Natural killer cell (primary cell): ENCODE measurements at regions of chr11 and their contacts with region 1.

Region 1: GRCh38 chr11:6603287-6604080 is at the starts of genes ILK and RRP8:
- DNase-seq: peak; percentile 84 to 90
- ATAC-seq: peak; percentile 76 to 91 (median 85)
- H3K4me3 ChIP-seq: peak within 1 kb of the TSS; percentile 85
- H3K4me3 Mint-ChIP-seq: no peak within 1 kb of the TSS
- H3K27ac ChIP-seq: peak within 1 kb of the TSS; percentile 93
- H3K27ac Mint-ChIP-seq: no peak within 1 kb of the TSS
- H3K4me1 ChIP-seq: peaks cover 55% of the 10 kb centered on the region
- H3K4me1 Mint-ChIP-seq: peaks cover 29 to 32% of the 10 kb centered on the region in 2 donors
- H3K27me3 ChIP-seq: no peaks in the 10 kb centered on the region
- H3K27me3 Mint-ChIP-seq: no peaks in the 10 kb centered on the region
- CTCF ChIP-seq: no peak
- total RNA-seq, gene ILK: 109 to 145 (median 142) TPM
- total RNA-seq, gene RRP8: 31.3 to 35.9 (median 31.9) TPM

Region 2: DNA sequence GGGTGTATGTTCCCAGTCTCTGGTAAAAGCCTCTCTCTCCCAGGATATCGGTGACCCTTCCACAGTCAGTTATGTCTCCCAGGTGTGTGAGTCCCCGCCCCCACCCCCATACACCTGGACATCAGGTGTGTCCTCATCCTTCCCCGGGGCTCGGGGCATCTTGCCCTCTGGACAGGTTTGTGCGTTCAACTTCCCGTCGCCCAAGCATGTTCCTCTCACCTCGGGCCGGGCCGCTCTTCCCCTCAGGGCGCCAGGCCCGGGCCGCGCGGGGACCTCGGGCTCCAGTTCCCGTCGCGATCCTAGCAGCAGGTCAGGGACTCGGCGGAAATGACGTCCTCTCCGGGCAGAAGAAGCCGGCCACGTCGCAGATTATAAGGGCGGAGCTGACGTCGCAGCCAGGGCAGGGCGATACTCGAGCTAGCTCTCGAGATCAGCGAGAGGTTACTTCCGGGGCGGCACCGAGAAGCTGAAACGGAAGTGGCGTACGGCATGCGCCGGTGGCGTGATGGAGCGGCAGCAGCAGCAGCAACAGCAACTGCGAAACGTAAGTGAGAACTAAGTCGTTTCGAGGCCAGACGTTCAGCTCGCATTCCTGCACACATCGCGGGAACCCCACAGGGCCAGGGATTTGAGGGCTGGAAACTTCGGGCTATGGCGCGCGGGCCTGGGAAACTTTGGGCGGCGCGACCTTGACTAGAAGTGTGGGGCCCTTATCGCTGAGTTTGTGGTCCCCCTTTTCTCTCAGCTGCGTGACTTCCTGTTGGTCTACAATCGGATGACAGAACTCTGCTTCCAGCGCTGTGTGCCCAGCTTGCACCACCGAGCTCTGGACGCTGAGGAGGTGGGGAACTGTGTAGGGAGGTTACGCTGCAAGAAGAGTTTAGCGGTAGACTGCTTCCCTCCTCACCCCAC is 122.2 kb before region 1 on chr11 and contains the starts of genes ARFIP2 and TIMM10B:
- intact Hi-C with region 1: loop called (anchors 2 kb)
- DNase-seq: peak; percentile 95 to 99
- ATAC-seq: peak; percentile 92 to 98 (median 96)
- H3K4me3 ChIP-seq: peak within 1 kb of the TSS; percentile 74
- H3K4me3 Mint-ChIP-seq: peak within 1 kb of the TSS; percentile 91
- H3K27ac ChIP-seq: peak within 1 kb of the TSS; percentile 95
- H3K27ac Mint-ChIP-seq: peak within 1 kb of the TSS; percentile 95 to 99
- H3K4me1 ChIP-seq: peaks cover 22% of the 10 kb centered on the region
- H3K4me1 Mint-ChIP-seq: peaks cover 32 to 37% of the 10 kb centered on the region in 2 donors
- H3K27me3 ChIP-seq: no peaks in the 10 kb centered on the region
- H3K27me3 Mint-ChIP-seq: no peaks in the 10 kb centered on the region
- CTCF ChIP-seq: no peak
- total RNA-seq, gene ARFIP2: 44.7 to 62.3 (median 51.4) TPM
- total RNA-seq, gene TIMM10B: 69.6 to 92.8 (median 71.4) TPM

Region 3: GRCh38 chr11:6619004-6619745 is 15.7 kb after region 1 on chr11 and contains the start of gene TPP1:
- intact Hi-C with region 1: loop called (anchors 1 kb)
- DNase-seq: peak; percentile 89 to 95
- ATAC-seq: peak; percentile 89 to 97 (median 96)
- H3K4me3 ChIP-seq: peak within 1 kb of the TSS; percentile 72
- H3K4me3 Mint-ChIP-seq: no peak within 1 kb of the TSS
- H3K27ac ChIP-seq: peak within 1 kb of the TSS; percentile 89
- H3K27ac Mint-ChIP-seq: no peak within 1 kb of the TSS
- H3K4me1 ChIP-seq: peaks cover 26% of the 10 kb centered on the region
- H3K4me1 Mint-ChIP-seq: peaks cover 0 to 8% of the 10 kb centered on the region in 2 donors
- H3K27me3 ChIP-seq: no peaks in the 10 kb centered on the region
- H3K27me3 Mint-ChIP-seq: no peaks in the 10 kb centered on the region
- CTCF ChIP-seq: no peak
- total RNA-seq, gene TPP1: 123 to 135 (median 131) TPM

Region 4: DNA sequence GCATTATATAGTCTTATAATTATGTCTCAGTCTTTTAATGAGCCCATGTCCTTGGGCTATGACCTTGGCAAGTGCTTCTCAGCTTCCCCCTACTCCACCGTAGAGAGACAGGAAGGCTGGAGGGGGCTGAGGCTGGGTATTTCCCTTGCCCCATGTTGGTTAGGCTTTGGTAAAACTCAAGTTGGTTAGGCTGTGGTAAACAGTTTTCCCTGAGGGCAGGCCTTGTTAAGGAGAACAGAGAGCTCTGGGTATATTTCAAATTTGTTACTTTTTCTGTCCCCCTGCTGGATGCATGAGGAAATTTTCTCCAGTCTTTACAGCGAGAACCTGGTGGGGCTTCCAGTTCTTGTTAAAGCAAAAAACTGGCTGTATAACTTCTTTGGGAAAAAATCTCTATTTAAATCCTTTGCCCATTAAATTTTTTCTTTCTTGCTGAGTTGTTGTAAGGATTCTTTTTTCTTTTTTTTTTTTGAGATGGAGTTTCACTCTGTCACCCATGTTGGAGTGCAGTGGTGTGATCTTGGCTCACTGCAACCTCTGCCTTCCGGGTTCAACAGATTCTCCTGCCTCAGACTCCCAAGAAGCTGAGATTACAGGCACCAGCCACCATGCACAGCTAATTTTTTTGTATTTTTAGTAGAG is 64.4 kb after region 1 on chr11:
- intact Hi-C with region 1: loop called (anchors 5 kb)
- DNase-seq: peak in 1 of 2 donors; percentile 78
- ATAC-seq: peak; percentile 66 to 94 (median 86)
- H3K4me3 ChIP-seq: no peak overlapping the region
- H3K4me3 Mint-ChIP-seq: no peak overlapping the region
- H3K27ac ChIP-seq: peak overlapping the region; percentile 35
- H3K27ac Mint-ChIP-seq: peak overlapping the region; percentile 65 to 78
- H3K4me1 ChIP-seq: peaks cover 10% of the 10 kb centered on the region
- H3K4me1 Mint-ChIP-seq: peaks cover 10 to 14% of the 10 kb centered on the region in 2 donors
- H3K27me3 ChIP-seq: no peaks in the 10 kb centered on the region
- H3K27me3 Mint-ChIP-seq: peaks cover 0 to 3% of the 10 kb centered on the region in 2 donors
- CTCF ChIP-seq: peak; percentile 66

Region 5: DNA sequence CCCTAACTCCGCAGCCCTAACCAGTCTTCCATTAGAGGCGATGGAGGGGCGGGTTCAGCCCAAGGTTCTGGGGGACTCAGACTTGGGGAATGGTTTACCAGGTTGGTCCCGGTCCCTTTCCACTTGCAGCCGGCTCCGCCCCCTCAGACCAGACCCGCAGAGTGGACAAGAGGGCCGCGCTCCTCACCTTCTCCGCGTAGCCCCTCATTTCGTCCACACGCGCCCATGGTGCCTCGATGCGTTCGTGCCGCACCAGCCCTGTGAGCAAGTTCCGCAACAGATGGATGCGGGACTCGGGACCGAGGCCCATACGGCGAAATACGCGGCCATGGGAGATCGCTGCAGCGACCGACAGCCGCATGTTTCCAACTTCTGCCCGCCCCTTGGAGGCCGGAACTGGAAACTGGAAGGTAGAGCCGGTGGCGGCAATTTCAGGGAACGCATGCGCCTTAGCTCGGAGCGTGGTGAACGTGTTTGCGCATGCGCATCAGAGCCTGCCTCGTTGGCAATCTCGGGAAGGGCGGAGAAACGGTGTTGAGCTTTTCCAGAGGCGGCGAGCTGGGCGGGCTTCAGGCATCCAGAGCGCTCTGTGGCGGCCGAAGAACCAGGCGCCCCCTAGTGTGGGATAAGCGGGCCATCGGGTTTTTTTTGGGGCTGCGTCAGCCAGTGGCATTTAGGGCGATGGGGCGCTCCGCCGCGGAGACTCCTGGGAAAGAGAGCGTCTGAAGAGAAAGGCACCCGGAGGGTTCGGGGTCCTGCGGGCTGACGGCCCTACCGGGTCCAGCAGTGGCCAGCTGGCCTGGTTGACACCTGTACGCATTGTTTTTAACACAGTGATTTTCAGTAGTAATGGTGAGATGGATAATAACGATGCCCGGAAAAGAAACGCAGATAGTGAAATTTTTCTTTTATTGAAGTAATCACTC is 79.7 kb after region 1 on chr11 and contains the start of gene MRPL17:
- intact Hi-C with region 1: loop called (anchors 1 kb)
- DNase-seq: peak; percentile 94 to 100
- ATAC-seq: peak; percentile 86 to 95 (median 94)
- H3K4me3 ChIP-seq: peak within 1 kb of the TSS; percentile 92
- H3K4me3 Mint-ChIP-seq: peak within 1 kb of the TSS; percentile 99
- H3K27ac ChIP-seq: peak within 1 kb of the TSS; percentile 89
- H3K27ac Mint-ChIP-seq: peak within 1 kb of the TSS; percentile 99 to 100
- H3K4me1 ChIP-seq: peaks cover 12% of the 10 kb centered on the region
- H3K4me1 Mint-ChIP-seq: peaks cover 24 to 31% of the 10 kb centered on the region in 2 donors
- H3K27me3 ChIP-seq: no peaks in the 10 kb centered on the region
- H3K27me3 Mint-ChIP-seq: no peaks in the 10 kb centered on the region
- CTCF ChIP-seq: peak; percentile 55
- total RNA-seq, gene MRPL17: 9.0 to 11.8 (median 11.4) TPM

Region 6: DNA sequence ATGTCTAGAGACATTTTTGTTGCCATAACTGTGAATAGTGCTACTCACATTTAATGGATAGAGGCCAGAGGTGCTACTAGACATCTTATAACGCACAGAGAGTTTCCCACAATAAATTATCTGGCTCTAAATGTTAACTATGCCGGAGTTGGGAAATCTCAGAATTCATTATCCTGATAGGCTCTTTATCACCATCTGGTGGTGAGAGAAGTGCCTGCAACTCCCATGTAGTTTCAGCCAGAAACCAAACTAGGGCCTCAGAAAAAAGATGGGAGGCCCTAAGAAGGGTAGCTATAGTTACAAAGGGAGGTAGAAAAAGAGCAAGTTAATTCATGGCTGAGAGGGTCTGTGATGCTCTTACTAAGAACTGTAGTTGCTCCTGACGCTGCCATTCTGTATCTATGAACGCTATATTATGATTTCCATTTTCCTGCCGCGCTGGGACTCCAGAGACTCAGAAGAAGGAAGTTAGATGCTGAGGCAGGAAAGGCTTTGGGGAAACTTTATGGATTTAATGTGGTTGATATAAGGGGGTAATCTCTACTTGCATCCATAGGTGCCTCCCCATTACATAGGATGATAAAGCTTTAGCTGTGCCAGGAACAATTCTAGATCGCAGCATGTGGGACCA is 102.5 kb after region 1 on chr11:
- intact Hi-C with region 1: loop called (anchors 1 kb)
- DNase-seq: peak in 1 of 2 donors; percentile 73
- ATAC-seq: peak; percentile 58 to 82 (median 65)
- H3K4me3 ChIP-seq: no peak overlapping the region
- H3K4me3 Mint-ChIP-seq: no peak overlapping the region
- H3K27ac ChIP-seq: peak overlapping the region; percentile 26
- H3K27ac Mint-ChIP-seq: peak overlapping the region; percentile 47 to 84
- H3K4me1 ChIP-seq: no peaks in the 10 kb centered on the region
- H3K4me1 Mint-ChIP-seq: peaks cover 24 to 29% of the 10 kb centered on the region in 2 donors
- H3K27me3 ChIP-seq: no peaks in the 10 kb centered on the region
- H3K27me3 Mint-ChIP-seq: no peaks in the 10 kb centered on the region
- CTCF ChIP-seq: peak; percentile 87

Region 7: GRCh38 chr11:6746086-6746618 is 142.7 kb after region 1 on chr11:
- intact Hi-C with region 1: loop called (anchors 10 kb)
- DNase-seq: peak; percentile 38 to 78
- ATAC-seq: peak; percentile 87 to 91 (median 88)
- H3K4me3 ChIP-seq: peak overlapping the region; percentile 84
- H3K4me3 Mint-ChIP-seq: no peak overlapping the region
- H3K27ac ChIP-seq: peak overlapping the region; percentile 91
- H3K27ac Mint-ChIP-seq: no peak overlapping the region
- H3K4me1 ChIP-seq: peaks cover 10% of the 10 kb centered on the region
- H3K4me1 Mint-ChIP-seq: peaks cover 0 to under 1% of the 10 kb centered on the region in 2 donors
- H3K27me3 ChIP-seq: no peaks in the 10 kb centered on the region
- H3K27me3 Mint-ChIP-seq: no peaks in the 10 kb centered on the region
- CTCF ChIP-seq: no peak